K562 (cell line): ENCODE measurements at regions of chr3 and their contacts with region 1.

Region 1: GRCh38 chr3:17032407-17033034 is 147.8 kb downstream of the PLCL2 start:
- DNase-seq: peak; percentile 19 to 47 (median 32)
- ATAC-seq: peak; percentile 92
- H3K4me3 ChIP-seq: no peak overlapping the region
- H3K27ac ChIP-seq: no peak overlapping the region
- H3K4me1 ChIP-seq: no peaks in the 10 kb centered on the region
- H3K27me3 ChIP-seq: peaks cover 0 to 11% of the 10 kb centered on the region in 2 experiments; a peak in 3 of 5 replicates
- CTCF ChIP-seq: peak; percentile 35 to 70 (median 70)
- EP300 ChIP-seq: no peak
- POLR2A ChIP-seq: no peak
- RAD21 ChIP-seq: peak; percentile 64 to 76

Region 2: GRCh38 chr3:16828815-16829214 is 203.7 kb before region 1 on chr3:
- CTCF ChIA-PET with region 1: no interaction called
- POLR2A ChIA-PET with region 1: no interaction called
- in situ Hi-C with region 1: no loop called
- intact Hi-C with region 1: loop called (anchors 5 kb)
- DNase-seq: peak; percentile 18 to 41 (median 27)
- ATAC-seq: peak; percentile 82
- H3K4me3 ChIP-seq: no peak overlapping the region
- H3K27ac ChIP-seq: no peak overlapping the region
- H3K4me1 ChIP-seq: no peaks in the 10 kb centered on the region
- H3K27me3 ChIP-seq: no peaks in the 10 kb centered on the region
- CTCF ChIP-seq: peak; percentile 51 to 67 (median 58)
- EP300 ChIP-seq: no peak
- POLR2A ChIP-seq: no peak
- RAD21 ChIP-seq: peak in 1 of 2 experiments; percentile 50; a peak in 3 of 4 replicates

Region 3: GRCh38 chr3:16884084-16884747 is 148.3 kb before region 1 on chr3:
- CTCF ChIA-PET with region 1: no interaction called
- POLR2A ChIA-PET with region 1: no interaction called
- in situ Hi-C with region 1: no loop called
- intact Hi-C with region 1: loop called (anchors 2 kb)
- DNase-seq: peak; percentile 38 to 70 (median 68)
- ATAC-seq: peak; percentile 87
- H3K4me3 ChIP-seq: peak overlapping the region; percentile 42
- H3K27ac ChIP-seq: no peak overlapping the region
- H3K4me1 ChIP-seq: peaks cover 0 to 17% of the 10 kb centered on the region in 2 experiments; a peak in 3 of 5 replicates
- H3K27me3 ChIP-seq: peaks cover 29 to 31% of the 10 kb centered on the region in 2 experiments
- CTCF ChIP-seq: peak in 2 of 3 experiments; percentile 34 to 55; a peak in 5 of 6 replicates
- EP300 ChIP-seq: no peak
- POLR2A ChIP-seq: no peak
- RAD21 ChIP-seq: no peak